Endothelial cell of umbilical vein (primary cell): ENCODE measurements at regions of chr22 and their contacts with region 1.

Region 1: DNA sequence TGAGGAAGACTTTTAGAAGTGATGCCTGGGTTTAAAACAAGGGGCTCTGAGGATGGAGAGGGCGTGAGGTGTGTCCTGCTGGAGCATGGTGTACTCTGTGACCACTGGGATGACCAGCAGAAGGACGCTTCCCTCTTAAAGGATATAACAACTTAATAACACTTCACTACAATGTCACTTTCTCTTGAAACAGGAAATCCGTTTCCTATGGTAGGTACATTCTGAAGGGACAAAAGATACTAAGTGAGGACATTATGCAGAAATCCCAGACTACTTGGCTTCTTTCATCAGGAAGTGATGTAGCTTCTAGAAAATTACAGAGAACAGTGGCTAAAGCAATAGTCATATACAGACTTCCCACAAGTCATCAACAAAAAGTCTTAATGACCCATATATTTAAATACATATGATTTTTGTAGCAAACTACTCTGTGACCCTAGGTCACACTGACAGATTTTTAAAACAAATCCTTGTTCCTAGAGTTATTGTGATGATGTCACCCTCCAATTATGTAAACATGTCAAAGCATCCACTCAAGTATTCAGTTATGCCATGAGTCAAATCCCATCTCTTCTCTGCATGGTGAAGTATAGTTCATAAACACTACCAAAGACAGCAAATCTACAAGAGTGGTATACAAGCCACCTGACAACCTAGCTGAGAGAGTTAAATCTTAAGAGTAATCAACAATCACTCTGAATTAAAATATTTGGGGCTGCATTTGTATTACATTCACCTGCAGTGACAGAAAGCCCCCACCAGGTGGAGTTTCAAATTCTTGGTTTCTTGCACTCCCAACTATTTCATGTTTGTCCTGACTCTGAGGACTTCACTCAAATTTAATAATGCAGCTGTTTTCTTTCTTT is 32.8 kb downstream of the PITPNB start:
- DNase-seq: peak; percentile 85
- H3K4me3 ChIP-seq: peak overlapping the region in 1 of 3 experiments; percentile 1
- H3K27ac ChIP-seq: peak overlapping the region; percentile 81
- H3K4me1 ChIP-seq: peaks cover 50% of the 10 kb centered on the region
- H3K27me3 ChIP-seq: no peaks in the 10 kb centered on the region
- CTCF ChIP-seq: peak; percentile 63 to 65
- POLR2A ChIP-seq: no peak

Region 2: DNA sequence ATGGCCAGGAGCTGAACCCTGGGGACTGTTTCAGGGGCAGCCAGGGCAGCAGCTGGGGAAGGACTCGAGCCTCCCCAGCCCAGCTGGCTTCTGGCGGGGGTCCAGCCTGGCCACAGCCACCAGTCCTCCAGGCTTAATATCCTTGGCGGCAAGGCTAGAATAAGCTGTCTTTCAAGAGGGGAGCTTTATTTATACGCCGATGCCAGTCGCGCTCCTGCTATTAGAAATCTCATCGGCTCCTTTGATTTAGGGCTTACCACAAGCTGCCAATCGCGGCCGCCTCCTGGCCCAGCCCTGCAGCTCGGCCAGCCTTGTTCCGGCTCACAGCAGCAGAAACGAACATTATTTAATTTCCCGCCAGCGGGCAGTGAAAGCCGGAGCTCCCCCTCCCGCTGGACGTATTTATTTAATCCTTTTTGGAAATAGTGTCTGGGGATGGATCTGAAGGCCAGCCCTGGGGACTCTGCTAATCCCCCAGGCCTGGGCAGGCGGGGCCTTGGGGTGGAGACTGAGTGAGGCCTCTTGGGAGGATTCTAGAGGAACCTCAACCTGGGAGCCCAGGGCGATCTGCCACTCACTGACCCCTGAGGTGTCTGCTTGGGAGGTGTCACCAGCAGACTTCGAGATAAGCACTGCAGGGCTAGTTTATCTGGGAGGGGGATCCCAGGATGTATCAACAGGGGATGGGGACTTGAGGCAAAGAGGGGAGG is 447.8 kb before region 1 on chr22:
- CTCF ChIA-PET with region 1: no interaction called
- POLR2A ChIA-PET with region 1: no interaction called
- dilution Hi-C with region 1: no loop called
- intact Hi-C with region 1: no loop called
- DNase-seq: no peak
- H3K4me3 ChIP-seq: no peak overlapping the region
- H3K27ac ChIP-seq: no peak overlapping the region
- H3K4me1 ChIP-seq: no peaks in the 10 kb centered on the region
- H3K27me3 ChIP-seq: peaks cover 6% of the 10 kb centered on the region in 2 experiments
- CTCF ChIP-seq: no peak
- POLR2A ChIP-seq: no peak

Region 3: GRCh38 chr22:27900153-27900552 is 13.9 kb after region 1 on chr22:
- CTCF ChIA-PET with region 1: interaction called, 18 read pairs
- POLR2A ChIA-PET with region 1: no interaction called
- dilution Hi-C with region 1: no loop called
- intact Hi-C with region 1: no loop called
- DNase-seq: no peak
- H3K4me3 ChIP-seq: no peak overlapping the region
- H3K27ac ChIP-seq: no peak overlapping the region
- H3K4me1 ChIP-seq: no peaks in the 10 kb centered on the region
- H3K27me3 ChIP-seq: no peaks in the 10 kb centered on the region
- CTCF ChIP-seq: no peak
- POLR2A ChIP-seq: no peak

Region 4: DNA sequence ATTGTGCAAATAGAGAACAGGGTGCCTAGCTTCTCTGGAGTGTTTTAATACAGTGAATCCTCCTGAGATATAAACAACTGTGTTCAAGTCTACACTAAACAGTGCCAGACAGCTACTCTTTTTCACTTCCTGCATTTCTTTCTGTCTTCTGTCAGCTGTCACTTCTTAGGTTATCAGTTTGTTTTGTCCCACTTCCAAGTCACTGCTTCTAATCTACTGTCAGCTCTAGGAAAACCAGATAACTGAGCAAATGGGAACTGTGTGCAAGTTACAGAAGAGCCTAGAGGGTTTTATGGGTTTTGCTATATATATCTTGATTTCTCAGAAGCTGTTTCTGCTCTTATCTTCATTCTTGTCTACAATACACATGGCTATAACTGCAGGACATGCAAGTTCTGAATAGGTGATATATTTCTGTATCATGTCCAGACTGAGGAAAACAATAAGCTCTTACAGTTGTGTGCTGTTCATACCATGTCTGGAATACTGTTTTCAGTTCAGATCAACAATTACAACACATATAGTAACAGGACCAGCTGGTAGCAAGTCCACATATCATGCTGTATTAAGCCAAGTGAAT is 27.0 kb after region 1 on chr22:
- CTCF ChIA-PET with region 1: interaction called, 21 read pairs
- POLR2A ChIA-PET with region 1: no interaction called
- dilution Hi-C with region 1: no loop called
- intact Hi-C with region 1: no loop called
- DNase-seq: peak; percentile 30
- H3K4me3 ChIP-seq: no peak overlapping the region
- H3K27ac ChIP-seq: no peak overlapping the region
- H3K4me1 ChIP-seq: peaks cover 35% of the 10 kb centered on the region
- H3K27me3 ChIP-seq: no peaks in the 10 kb centered on the region
- CTCF ChIP-seq: no peak
- POLR2A ChIP-seq: no peak

Region 5: DNA sequence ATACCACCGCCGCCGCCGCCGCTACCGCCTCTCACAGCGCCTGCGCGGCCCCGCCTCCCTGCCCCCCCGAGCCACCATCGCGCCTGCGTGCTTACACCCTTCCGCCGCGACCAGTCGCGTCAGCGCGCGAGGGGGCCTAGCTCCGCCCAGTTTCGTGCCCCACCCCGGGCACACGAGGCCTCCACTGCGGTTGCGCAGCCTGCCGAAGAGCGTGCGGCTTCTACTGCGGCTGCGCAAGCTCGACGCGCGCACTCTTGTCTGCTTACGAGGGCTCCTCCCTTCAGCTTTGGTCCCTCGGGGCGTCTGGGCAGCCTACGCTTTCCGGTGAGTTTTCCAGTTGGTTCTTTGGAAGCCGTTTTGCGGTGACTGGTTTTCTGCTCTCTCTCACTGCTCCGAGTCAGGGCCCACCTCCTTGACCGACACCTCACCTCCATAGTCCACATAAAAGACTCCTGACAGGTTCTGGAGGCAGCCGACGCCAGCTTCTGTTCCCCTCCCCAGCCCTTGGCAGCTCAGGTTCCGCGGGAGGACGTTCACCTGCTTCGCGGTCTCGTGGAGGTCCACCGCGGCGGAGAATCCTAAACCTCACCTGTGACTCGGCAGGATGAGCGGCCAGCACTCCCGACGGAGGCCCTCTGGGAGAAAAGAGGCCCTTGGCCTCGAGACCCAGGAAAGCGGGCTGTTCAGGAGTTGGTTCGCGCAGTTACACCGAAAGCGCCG is 33.2 kb after region 1 on chr22 and contains the start of gene PITPNB:
- CTCF ChIA-PET with region 1: interaction called, 21 read pairs
- POLR2A ChIA-PET with region 1: no interaction called
- dilution Hi-C with region 1: no loop called
- intact Hi-C with region 1: loop called (anchors 1 kb)
- DNase-seq: peak; percentile 99
- H3K4me3 ChIP-seq: peak within 1 kb of the TSS; percentile 77 to 100 (median 88)
- H3K27ac ChIP-seq: peak within 1 kb of the TSS; percentile 98
- H3K4me1 ChIP-seq: peaks cover 41% of the 10 kb centered on the region
- H3K27me3 ChIP-seq: no peaks in the 10 kb centered on the region
- CTCF ChIP-seq: no peak
- POLR2A ChIP-seq: peak; percentile 88
- total RNA-seq, gene PITPNB: 108 and 109 TPM in 2 replicates

Region 6: GRCh38 chr22:27990879-27991278 is 104.7 kb after region 1 on chr22:
- CTCF ChIA-PET with region 1: interaction called, 11 read pairs
- POLR2A ChIA-PET with region 1: no interaction called
- dilution Hi-C with region 1: no loop called
- intact Hi-C with region 1: loop called (anchors 5 kb)
- DNase-seq: peak; percentile 48
- H3K4me3 ChIP-seq: no peak overlapping the region
- H3K27ac ChIP-seq: no peak overlapping the region
- H3K4me1 ChIP-seq: peaks cover 3% of the 10 kb centered on the region
- H3K27me3 ChIP-seq: no peaks in the 10 kb centered on the region
- CTCF ChIP-seq: peak; percentile 63 to 82
- POLR2A ChIP-seq: no peak